CD8-positive, alpha-beta T cell (primary cell): ENCODE measurements at regions of chr12 and their contacts with region 1.

Region 1: DNA sequence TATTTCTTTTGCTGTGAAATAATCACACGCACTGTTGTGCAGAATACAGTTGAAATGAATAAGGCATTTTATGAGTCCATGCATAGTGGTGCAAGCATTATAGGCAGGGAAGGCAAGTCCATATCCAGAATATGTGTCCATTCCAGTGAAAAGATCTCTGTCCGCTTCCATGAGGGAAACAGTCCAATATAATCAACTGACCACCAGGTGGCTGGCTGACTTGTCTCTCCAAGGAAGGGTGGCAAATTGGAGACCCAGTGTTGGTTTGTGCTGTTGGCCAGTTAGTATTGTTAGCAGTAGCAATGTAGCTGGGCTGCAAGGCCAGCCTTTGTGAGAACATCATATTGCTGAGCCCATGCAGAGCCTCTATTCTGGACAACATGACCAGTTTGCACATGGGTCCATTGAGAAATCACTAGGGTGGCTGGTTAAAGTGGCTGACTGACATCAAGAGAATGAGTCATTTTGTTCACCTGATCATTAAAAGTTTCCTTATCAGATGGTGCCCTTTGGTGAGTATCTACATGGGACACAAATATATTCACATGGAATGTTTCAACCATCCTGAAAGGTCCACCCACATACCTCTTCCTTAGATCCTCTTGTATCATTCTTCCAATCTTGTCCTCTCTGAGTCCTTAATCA is 17.3 kb upstream of the YAF2 start:
- DNase-seq: no peak
- ATAC-seq: no peak
- H3K4me3 ChIP-seq: no peak overlapping the region
- H3K4me3 Mint-ChIP-seq: no peak overlapping the region
- H3K27ac ChIP-seq: no peak overlapping the region
- H3K27ac Mint-ChIP-seq: no peak overlapping the region
- H3K4me1 ChIP-seq: no peaks in the 10 kb centered on the region
- H3K4me1 Mint-ChIP-seq: no peaks in the 10 kb centered on the region
- H3K27me3 ChIP-seq: no peaks in the 10 kb centered on the region
- H3K27me3 Mint-ChIP-seq: peaks cover 3% of the 10 kb centered on the region
- CTCF ChIP-seq: no peak

Region 2: DNA sequence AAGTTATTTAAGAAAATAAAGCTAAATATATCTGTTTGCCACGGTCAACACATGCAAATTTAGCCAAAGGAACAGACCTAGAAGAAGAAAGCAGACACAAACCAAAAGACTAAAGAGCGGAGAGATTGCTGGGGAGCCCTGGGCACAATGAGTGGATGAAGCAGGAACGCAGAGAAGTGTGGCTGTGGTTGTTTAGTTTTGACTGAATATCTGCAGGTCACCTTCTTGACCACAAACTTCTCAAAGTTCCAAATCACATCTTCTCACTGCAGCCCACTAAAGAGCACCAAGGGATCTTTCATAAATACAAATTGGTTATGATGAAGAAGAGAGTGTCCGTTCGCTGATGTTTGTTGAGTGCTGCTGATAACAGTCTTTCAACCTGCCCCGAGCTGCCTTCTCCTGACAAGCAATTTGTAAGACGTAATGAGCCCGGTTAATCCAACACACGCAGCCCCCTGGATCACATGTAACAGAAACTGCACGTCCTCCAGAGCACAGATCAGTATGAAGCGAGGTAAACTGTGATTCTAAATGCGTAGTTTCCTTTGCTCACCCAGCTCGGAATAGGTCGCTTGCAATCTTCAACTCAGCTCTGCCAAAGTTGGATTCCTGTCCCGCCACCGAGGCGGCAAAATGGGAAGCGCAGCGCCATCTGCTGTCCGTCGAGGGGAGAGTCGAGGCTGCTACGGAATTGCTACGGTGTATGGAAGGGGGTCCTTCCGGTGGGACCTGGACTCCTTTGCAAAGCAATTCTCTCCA is 231.4 kb before region 1 on chr12:
- CTCF ChIA-PET with region 1: no interaction called
- POLR2A ChIA-PET with region 1: no interaction called
- intact Hi-C with region 1: no loop called
- DNase-seq: peak; percentile 41 to 82 (median 66)
- ATAC-seq: peak; percentile 90
- H3K4me3 ChIP-seq: peak overlapping the region; percentile 32 to 47
- H3K4me3 Mint-ChIP-seq: peak overlapping the region; percentile 78
- H3K27ac ChIP-seq: no peak overlapping the region
- H3K27ac Mint-ChIP-seq: no peak overlapping the region
- H3K4me1 ChIP-seq: peaks cover 4% of the 10 kb centered on the region
- H3K4me1 Mint-ChIP-seq: peaks cover 9% of the 10 kb centered on the region
- H3K27me3 ChIP-seq: no peaks in the 10 kb centered on the region
- H3K27me3 Mint-ChIP-seq: peaks cover 24% of the 10 kb centered on the region
- CTCF ChIP-seq: peak; percentile 95

Region 3: GRCh38 chr12:42217656-42218055 is 37.7 kb before region 1 on chr12:
- CTCF ChIA-PET with region 1: no interaction called
- POLR2A ChIA-PET with region 1: no interaction called
- intact Hi-C with region 1: loop called in 1 of 2 experiments (anchors 5 kb)
- DNase-seq: no peak
- ATAC-seq: no peak
- H3K4me3 ChIP-seq: no peak overlapping the region
- H3K4me3 Mint-ChIP-seq: no peak overlapping the region
- H3K27ac ChIP-seq: no peak overlapping the region
- H3K27ac Mint-ChIP-seq: no peak overlapping the region
- H3K4me1 ChIP-seq: no peaks in the 10 kb centered on the region
- H3K4me1 Mint-ChIP-seq: peaks cover 63% of the 10 kb centered on the region
- H3K27me3 ChIP-seq: no peaks in the 10 kb centered on the region
- H3K27me3 Mint-ChIP-seq: no peaks in the 10 kb centered on the region
- CTCF ChIP-seq: no peak

Region 4: DNA sequence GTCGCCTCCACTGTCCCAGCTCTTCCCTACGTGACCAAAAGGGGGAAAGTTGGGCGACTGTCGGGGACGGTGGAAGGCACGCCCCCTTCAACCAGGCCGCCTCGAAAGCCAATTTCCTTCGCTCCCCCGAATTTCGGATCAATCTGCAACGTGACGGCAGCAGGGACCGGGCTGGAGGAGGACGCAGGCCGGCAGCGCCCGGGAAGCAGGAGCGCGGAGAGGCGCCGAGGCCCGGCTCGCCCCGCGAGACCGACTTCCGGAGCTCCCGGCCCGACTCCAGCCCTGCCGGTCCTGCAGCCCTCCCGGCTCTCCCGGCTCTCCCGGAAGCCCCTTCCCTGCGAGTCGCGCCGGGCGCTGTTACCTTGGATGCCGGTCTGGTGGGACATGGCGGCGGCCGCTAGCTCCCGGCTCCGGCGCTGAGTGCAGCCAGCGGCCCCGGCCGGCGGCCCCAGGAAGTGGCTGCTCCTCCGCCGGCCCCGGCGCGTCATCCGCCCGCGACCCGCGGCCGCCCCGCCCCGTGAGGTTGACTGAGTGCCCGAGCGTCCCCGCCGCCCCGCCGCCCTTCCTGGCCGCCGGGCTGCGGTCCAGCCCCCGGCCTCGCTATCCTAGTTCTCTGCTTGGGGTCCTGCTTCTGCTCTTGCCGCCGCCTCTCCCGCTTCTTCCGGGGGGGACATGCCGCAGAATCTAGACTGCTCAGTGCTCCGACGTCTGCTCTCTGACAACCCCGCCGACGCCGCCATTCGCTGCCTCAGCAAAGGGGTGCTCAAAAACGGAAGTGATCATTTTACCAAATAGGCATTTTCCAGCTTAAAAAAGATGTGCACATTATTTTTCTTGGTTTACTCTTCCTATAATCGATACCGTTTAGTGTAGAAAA is 1550.8 kb after region 1 on chr12 and contains the start of gene TWF1:
- CTCF ChIA-PET with region 1: no interaction called
- POLR2A ChIA-PET with region 1: no interaction called
- intact Hi-C with region 1: no loop called
- DNase-seq: peak; percentile 69 to 93 (median 83)
- ATAC-seq: peak; percentile 85
- H3K4me3 ChIP-seq: peak within 1 kb of the TSS; percentile 85 to 88
- H3K4me3 Mint-ChIP-seq: peak within 1 kb of the TSS; percentile 100
- H3K27ac ChIP-seq: peak within 1 kb of the TSS; percentile 94 to 97
- H3K27ac Mint-ChIP-seq: peak within 1 kb of the TSS; percentile 100
- H3K4me1 ChIP-seq: peaks cover 36% of the 10 kb centered on the region
- H3K4me1 Mint-ChIP-seq: peaks cover 42% of the 10 kb centered on the region
- H3K27me3 ChIP-seq: no peaks in the 10 kb centered on the region
- H3K27me3 Mint-ChIP-seq: no peaks in the 10 kb centered on the region
- CTCF ChIP-seq: no peak
- total RNA-seq, gene TWF1: 74.1 to 82.2 TPM